ENCODE measurements at regions of chr18 and their contacts with region 1.

Region 1: DNA sequence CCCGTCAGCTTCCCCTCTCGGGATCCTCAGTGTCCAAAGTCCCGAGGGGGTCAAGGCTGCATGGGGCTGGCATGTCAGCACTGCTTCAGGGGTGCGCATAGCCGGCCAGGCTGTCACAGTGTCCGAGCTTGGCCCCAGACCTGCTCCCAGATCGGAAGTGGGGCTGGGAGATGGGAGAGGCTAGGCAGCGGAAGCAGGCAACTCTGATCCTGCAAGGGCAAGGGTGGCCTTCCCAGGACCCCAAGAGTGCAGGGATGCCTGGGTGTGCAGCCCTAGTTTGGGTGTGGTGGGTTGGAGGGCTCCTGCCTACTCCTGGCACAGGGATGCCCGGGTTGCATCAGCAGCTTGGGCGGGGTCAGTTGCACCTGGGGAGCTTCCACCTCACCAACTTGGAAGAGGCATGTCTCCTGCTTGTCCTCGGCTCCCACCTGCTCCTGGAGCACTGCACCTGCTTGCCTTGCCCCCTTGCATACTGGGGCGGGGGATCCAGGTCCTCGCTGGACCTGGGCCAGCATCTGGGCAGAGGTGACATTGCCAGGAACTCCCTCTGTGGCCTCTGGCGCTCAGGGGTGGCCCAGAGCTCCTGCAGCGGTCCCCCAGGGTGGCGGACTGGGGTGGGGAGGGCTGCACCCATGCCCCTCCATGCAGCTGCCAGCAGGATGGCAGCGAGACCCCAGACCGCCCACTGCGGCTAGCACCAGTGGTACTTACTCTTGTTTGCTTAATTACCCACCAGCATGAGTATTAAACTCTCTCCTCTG is 41.3 kb downstream of the CBLN2 start:
- DNase-seq: no peak
- H3K4me3 ChIP-seq: no peak overlapping the region
- H3K27ac ChIP-seq: no peak overlapping the region
- H3K4me1 ChIP-seq: no peaks in the 10 kb centered on the region
- H3K27me3 ChIP-seq: no peaks in the 10 kb centered on the region
- CTCF ChIP-seq: no peak

Region 2: GRCh38 chr18:72375618-72376017 is 127.2 kb before region 1 on chr18:
- CTCF ChIA-PET with region 1: no interaction called
- POLR2A ChIA-PET with region 1: no interaction called
- intact Hi-C with region 1: no loop called
- DNase-seq: no peak
- H3K4me3 ChIP-seq: no peak overlapping the region
- H3K27ac ChIP-seq: no peak overlapping the region
- H3K4me1 ChIP-seq: no peaks in the 10 kb centered on the region
- H3K27me3 ChIP-seq: no peaks in the 10 kb centered on the region
- CTCF ChIP-seq: no peak

Region 3: DNA sequence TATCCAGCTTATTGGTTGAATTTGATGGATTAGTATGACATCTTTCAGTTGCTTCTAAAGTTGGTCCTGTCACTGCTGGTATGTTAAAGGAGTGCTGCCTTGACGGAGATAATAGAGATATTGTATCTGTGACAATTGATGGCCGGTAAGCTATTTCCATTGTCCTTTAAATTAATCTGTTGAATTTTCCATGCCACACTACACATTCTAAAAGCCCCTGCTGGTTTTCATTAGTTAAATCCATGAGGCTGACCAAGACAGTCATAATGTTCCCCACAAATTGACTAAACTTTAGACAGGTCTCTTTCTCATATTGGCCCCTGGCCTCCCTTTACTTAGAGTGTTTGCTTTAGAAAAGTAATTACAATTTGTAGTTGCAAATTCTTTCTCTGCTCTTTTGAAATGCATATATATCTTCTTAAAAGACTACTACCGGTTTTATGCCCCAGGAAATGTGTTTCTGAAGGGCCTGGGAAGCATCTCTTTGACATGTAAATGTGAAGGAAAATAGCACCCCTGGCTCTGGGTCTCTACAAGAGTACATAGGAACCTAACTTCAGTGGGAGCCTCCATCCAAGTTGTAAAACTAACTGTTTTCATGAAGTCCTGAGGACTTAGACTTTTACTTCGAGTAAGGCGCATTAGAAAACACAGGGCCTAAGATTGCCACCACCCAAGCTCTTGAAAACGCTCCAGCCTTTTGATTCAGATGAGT is 58.3 kb before region 1 on chr18:
- CTCF ChIA-PET with region 1: no interaction called
- POLR2A ChIA-PET with region 1: no interaction called
- intact Hi-C with region 1: loop called (anchors 10 kb)
- DNase-seq: no peak
- H3K4me3 ChIP-seq: no peak overlapping the region
- H3K27ac ChIP-seq: no peak overlapping the region
- H3K4me1 ChIP-seq: no peaks in the 10 kb centered on the region
- H3K27me3 ChIP-seq: no peaks in the 10 kb centered on the region
- CTCF ChIP-seq: no peak

Region 4: GRCh38 chr18:72572896-72573295 is 70.0 kb after region 1 on chr18:
- CTCF ChIA-PET with region 1: no interaction called
- POLR2A ChIA-PET with region 1: no interaction called
- intact Hi-C with region 1: no loop called
- DNase-seq: no peak
- H3K4me3 ChIP-seq: no peak overlapping the region
- H3K27ac ChIP-seq: no peak overlapping the region
- H3K4me1 ChIP-seq: no peaks in the 10 kb centered on the region
- H3K27me3 ChIP-seq: no peaks in the 10 kb centered on the region
- CTCF ChIP-seq: no peak